Activated CD8-positive, alpha-beta T cell treated with anti-CD3 and anti-CD28 coated beads, Interleukin-2, amount 10 ng/mL, durations not matched to agents 7 days and 5 days (primary cell): ENCODE measurements at regions of chr19 and their contacts with region 1.

Region 1: GRCh38 chr19:1275260-1275975 is at the start of gene FAM174C:
- DNase-seq: peak; percentile 98
- ATAC-seq: peak; percentile 82
- H3K4me3 Mint-ChIP-seq: peak within 1 kb of the TSS; percentile 79
- H3K27ac Mint-ChIP-seq: peak within 1 kb of the TSS; percentile 95
- H3K4me1 Mint-ChIP-seq: peaks cover 54% of the 10 kb centered on the region
- H3K27me3 Mint-ChIP-seq: no peaks in the 10 kb centered on the region
- total RNA-seq, gene FAM174C: 57.1 TPM

Region 2: GRCh38 chr19:1173845-1174809 is 101.3 kb before region 1 on chr19 and contains the start of gene SBNO2:
- CTCF ChIA-PET with region 1: no interaction called
- POLR2A ChIA-PET with region 1: no interaction called
- DNase-seq: peak; percentile 94
- ATAC-seq: peak; percentile 87
- H3K4me3 Mint-ChIP-seq: peak within 1 kb of the TSS; percentile 87
- H3K27ac Mint-ChIP-seq: peak within 1 kb of the TSS; percentile 92
- H3K4me1 Mint-ChIP-seq: peaks cover 34% of the 10 kb centered on the region
- H3K27me3 Mint-ChIP-seq: no peaks in the 10 kb centered on the region
- total RNA-seq, gene SBNO2: 58.6 to 70.5 TPM

Region 3: GRCh38 chr19:1252821-1253513 is 22.5 kb before region 1 on chr19:
- CTCF ChIA-PET with region 1: no interaction called
- POLR2A ChIA-PET with region 1: interaction called, 10 read pairs
- DNase-seq: peak; percentile 85
- ATAC-seq: peak; percentile 16
- H3K4me3 Mint-ChIP-seq: peak overlapping the region; percentile 91
- H3K27ac Mint-ChIP-seq: peak overlapping the region; percentile 81
- H3K4me1 Mint-ChIP-seq: peaks cover 30% of the 10 kb centered on the region
- H3K27me3 Mint-ChIP-seq: no peaks in the 10 kb centered on the region

Region 4: DNA sequence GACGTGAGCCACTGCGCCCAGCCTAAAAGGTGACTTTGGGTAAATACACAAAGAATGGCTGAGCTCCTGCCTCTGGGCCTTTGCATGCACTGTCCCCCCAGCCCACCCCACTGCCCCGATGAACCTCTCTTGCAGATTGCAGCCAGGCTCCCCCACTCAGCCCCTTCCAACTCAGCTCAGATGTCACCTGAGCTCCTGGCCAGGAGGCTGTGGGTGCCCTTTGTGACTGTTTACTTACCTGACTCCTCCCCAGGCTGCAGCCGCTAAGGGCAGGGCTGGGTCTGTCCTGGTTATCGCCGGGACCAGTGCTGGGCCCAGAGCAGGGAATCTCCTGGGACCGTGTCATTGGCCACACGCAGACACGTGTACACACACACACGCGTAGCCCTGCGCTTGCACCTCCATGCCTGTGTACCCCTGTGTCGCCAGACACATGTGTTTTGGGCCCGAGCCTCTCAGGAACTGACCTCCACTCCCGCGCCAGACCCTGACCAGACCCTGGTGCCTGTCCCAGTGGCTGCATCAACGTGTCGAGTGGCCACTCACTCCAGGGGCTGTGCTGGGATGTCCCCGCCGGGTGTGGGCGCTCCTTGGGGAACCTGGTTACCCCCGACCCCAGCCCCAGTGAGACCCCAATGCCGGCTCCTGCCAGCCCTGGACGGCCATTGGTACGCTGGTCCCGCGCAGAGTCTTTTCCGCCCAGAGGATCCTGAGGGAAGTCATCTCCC is 28.9 kb after region 1 on chr19:
- CTCF ChIA-PET with region 1: no interaction called
- POLR2A ChIA-PET with region 1: no interaction called
- DNase-seq: no peak
- ATAC-seq: no peak
- H3K4me3 Mint-ChIP-seq: no peak overlapping the region
- H3K27ac Mint-ChIP-seq: no peak overlapping the region
- H3K4me1 Mint-ChIP-seq: no peaks in the 10 kb centered on the region
- H3K27me3 Mint-ChIP-seq: no peaks in the 10 kb centered on the region

Region 5: DNA sequence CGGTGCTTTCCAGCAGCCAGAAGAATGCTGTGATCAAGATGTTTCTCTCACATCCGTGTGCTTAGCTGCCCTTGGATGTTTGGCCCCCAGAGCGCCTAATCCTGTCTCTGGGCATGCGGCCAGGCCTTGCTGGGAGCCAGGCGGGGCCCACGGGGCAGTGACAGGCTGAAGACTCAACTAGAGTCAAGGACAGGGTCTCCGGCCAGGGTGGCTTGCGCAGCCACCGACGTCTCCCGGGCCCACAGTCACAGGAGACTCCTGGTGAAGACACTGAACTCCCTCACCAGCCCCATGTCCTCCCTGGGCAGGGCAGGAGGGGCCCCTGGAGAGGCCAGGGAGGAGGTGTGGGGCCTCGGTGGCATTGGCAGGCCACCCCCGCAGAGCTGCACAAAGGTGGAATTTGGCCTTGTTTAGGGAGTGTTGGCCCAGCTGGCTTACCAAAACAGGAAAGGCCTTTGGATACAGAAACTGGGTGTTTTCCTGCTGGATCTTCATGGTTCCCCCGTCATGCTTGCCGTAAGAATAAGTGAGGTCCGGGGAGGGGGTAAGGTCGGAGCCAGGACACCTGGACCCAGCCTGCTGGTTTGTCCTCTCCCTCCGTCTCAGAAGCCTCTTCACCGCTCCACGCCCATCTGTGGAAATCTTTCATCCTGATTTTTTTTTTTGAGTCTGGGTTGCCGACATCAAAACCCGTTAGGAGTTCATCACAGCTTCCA is 98.3 kb after region 1 on chr19:
- CTCF ChIA-PET with region 1: interaction called, 25 read pairs
- POLR2A ChIA-PET with region 1: no interaction called
- DNase-seq: no peak
- ATAC-seq: no peak
- H3K4me3 Mint-ChIP-seq: no peak overlapping the region
- H3K27ac Mint-ChIP-seq: no peak overlapping the region
- H3K4me1 Mint-ChIP-seq: no peaks in the 10 kb centered on the region
- H3K27me3 Mint-ChIP-seq: no peaks in the 10 kb centered on the region

Region 6: DNA sequence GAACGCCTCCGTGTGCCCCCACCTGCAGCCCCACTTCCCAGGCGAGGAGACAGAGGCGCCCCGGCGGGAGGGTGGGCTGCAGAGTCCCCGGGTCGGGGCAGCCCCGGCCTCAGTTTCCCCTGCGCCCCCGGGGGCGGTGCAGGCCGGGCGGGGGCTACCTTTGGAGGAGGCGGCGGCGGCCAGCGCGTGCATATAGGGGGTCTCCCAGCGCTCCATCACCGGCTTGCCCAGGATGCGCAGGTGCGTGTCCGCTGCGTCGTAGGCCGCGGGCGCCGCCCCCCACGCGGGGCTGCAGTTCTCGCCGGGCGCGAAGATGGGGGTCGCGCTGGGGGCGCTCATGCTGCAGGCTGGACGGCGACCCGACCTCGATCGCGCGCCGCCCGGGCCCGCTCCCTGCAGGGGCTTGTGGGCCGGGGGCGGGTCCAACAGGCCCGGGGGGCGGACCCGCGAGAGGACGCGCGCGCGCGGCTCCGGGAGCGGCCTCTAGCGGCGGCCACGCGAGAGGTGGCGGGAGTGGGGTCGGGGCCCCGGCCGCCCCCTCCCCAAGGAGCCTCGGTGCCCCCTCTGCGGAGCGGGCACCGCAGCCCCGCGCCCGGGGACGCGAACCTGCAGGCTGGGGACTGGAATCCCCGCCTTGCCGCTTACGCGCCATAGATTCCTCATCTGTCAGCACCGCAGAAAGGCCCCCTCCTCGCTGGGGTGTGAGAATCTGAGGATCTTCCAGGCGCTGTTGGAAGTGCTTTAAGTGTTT is 125.9 kb after region 1 on chr19 and contains the start of gene GAMT:
- CTCF ChIA-PET with region 1: no interaction called
- POLR2A ChIA-PET with region 1: no interaction called
- DNase-seq: peak; percentile 61
- ATAC-seq: peak; percentile 77
- H3K4me3 Mint-ChIP-seq: peak within 1 kb of the TSS; percentile 66
- H3K27ac Mint-ChIP-seq: no peak within 1 kb of the TSS
- H3K4me1 Mint-ChIP-seq: peaks cover 17% of the 10 kb centered on the region
- H3K27me3 Mint-ChIP-seq: peaks cover 5% of the 10 kb centered on the region
- total RNA-seq, gene GAMT: 26.2 to 26.8 TPM